Left ventricle myocardium inferior (tissue), 1 donor: ENCODE measurements at regions of chr1 and their contacts with region 1.

Region 1: GRCh38 chr1:244796718-244797406 is 38.6 kb upstream of the COX20 start:
- DNase-seq: no peak
- H3K4me3 ChIP-seq: no peak overlapping the region
- H3K27ac ChIP-seq: no peak overlapping the region
- H3K4me1 ChIP-seq: no peaks in the 10 kb centered on the region
- H3K27me3 ChIP-seq: no peaks in the 10 kb centered on the region
- CTCF ChIP-seq: peak; percentile 85

Region 2: DNA sequence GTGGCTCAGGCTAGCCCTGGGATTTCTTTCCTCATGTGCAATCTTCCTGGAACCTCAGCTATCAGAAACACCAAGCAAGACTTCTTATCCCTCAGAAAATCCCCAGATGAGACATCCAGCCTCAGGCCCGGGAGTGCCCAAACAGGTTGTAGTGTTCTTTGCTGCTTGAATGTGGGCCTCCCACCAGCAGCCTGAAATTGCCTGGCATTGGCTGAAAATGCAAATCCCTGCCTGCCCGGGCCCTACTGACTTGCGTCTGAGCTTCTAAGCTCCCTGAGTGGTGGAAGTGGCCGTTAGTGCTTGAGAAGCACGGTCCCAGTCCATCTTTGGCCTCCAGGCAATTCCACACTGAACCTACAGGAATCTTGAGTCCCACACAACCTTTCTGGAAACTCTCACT is 599.0 kb before region 1 on chr1:
- intact Hi-C with region 1: no loop called
- DNase-seq: no peak
- H3K4me3 ChIP-seq: no peak overlapping the region
- H3K27ac ChIP-seq: no peak overlapping the region
- H3K4me1 ChIP-seq: no peaks in the 10 kb centered on the region
- H3K27me3 ChIP-seq: no peaks in the 10 kb centered on the region
- CTCF ChIP-seq: no peak

Region 3: GRCh38 chr1:244391761-244392160 is 405.1 kb before region 1 on chr1:
- intact Hi-C with region 1: no loop called
- DNase-seq: no peak
- H3K4me3 ChIP-seq: no peak overlapping the region
- H3K27ac ChIP-seq: no peak overlapping the region
- H3K4me1 ChIP-seq: no peaks in the 10 kb centered on the region
- H3K27me3 ChIP-seq: no peaks in the 10 kb centered on the region
- CTCF ChIP-seq: no peak

Region 4: GRCh38 chr1:244599937-244600350 is 196.9 kb before region 1 on chr1:
- intact Hi-C with region 1: loop called (anchors 2 kb)
- DNase-seq: no peak
- H3K4me3 ChIP-seq: no peak overlapping the region
- H3K27ac ChIP-seq: no peak overlapping the region
- H3K4me1 ChIP-seq: no peaks in the 10 kb centered on the region
- H3K27me3 ChIP-seq: peaks cover 10% of the 10 kb centered on the region
- CTCF ChIP-seq: no peak

Region 5: DNA sequence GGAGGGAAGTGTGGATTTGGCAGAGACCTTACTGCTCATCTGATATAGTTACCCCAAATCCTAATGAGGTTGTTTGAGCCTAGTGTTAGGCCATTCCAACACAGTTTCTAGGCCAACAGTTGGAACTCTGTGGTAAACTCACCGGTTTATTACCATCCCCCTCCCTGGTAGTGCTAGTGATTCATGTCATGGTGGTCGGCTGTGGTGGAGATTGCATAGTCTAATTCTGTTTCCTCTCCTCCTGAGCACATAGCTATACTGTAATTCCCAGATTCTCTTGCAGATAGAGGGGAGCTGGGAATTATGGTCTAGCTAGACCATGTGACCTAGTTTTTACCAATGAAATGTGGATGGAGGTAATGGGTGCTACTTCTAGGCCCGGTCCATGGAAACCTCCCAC is 234.2 kb after region 1 on chr1:
- intact Hi-C with region 1: loop called (anchors 10 kb)
- DNase-seq: no peak
- H3K4me3 ChIP-seq: no peak overlapping the region
- H3K27ac ChIP-seq: no peak overlapping the region
- H3K4me1 ChIP-seq: no peaks in the 10 kb centered on the region
- H3K27me3 ChIP-seq: no peaks in the 10 kb centered on the region
- CTCF ChIP-seq: no peak